ENCODE measurements at regions of chr9 and their contacts with region 1.

Region 1: GRCh38 chr9:20611751-20612287 is 10.5 kb downstream of the MLLT3 start:
- DNase-seq: peak in 1 of 2 experiments; percentile 60
- H3K4me3 ChIP-seq: 0 out of 2 replicates have a peak overlapping the region, but pooled peaks have one; percentile 6
- H3K4me3 Mint-ChIP-seq: peak overlapping the region; percentile 55
- H3K27ac Mint-ChIP-seq: peak overlapping the region; percentile 74
- H3K4me1 ChIP-seq: peaks cover 58% of the 10 kb centered on the region
- H3K4me1 Mint-ChIP-seq: peaks cover 15% of the 10 kb centered on the region
- H3K27me3 ChIP-seq: no peaks in the 10 kb centered on the region
- H3K27me3 Mint-ChIP-seq: no peaks in the 10 kb centered on the region
- CTCF ChIP-seq: peak in 1 of 2 experiments; percentile 41

Region 2: GRCh38 chr9:20552874-20553575 is 58.8 kb before region 1 on chr9:
- CTCF ChIA-PET with region 1: no interaction called
- POLR2A ChIA-PET with region 1: no interaction called
- intact Hi-C with region 1: loop called (anchors 2 kb)
- DNase-seq: no peak
- H3K4me3 ChIP-seq: no peak overlapping the region
- H3K4me3 Mint-ChIP-seq: no peak overlapping the region
- H3K27ac Mint-ChIP-seq: no peak overlapping the region
- H3K4me1 ChIP-seq: peaks cover 36% of the 10 kb centered on the region
- H3K4me1 Mint-ChIP-seq: peaks cover 41% of the 10 kb centered on the region
- H3K27me3 ChIP-seq: no peaks in the 10 kb centered on the region
- H3K27me3 Mint-ChIP-seq: no peaks in the 10 kb centered on the region
- CTCF ChIP-seq: peak in 1 of 2 experiments; percentile 2

Measured in Caco-2 (cell line).